SK-N-SH (cell line): ENCODE measurements at regions of chr3 and their contacts with region 1.

Region 1: GRCh38 chr3:126752303-126752842 is 48.3 kb downstream of the CHCHD6 start:
- DNase-seq: peak; percentile 82
- H3K4me3 ChIP-seq: no peak overlapping the region; a peak in 1 of 4 replicates
- H3K27ac ChIP-seq: peak overlapping the region in 1 of 2 experiments; percentile 3; a peak in 1 of 4 replicates
- H3K4me1 ChIP-seq: peaks cover 0 to 53% of the 10 kb centered on the region in 2 experiments; a peak in 2 of 4 replicates
- H3K27me3 ChIP-seq: no peaks in the 10 kb centered on the region
- CTCF ChIP-seq: peak; percentile 93
- EP300 ChIP-seq: no peak
- RAD21 ChIP-seq: peak; percentile 98

Region 2: DNA sequence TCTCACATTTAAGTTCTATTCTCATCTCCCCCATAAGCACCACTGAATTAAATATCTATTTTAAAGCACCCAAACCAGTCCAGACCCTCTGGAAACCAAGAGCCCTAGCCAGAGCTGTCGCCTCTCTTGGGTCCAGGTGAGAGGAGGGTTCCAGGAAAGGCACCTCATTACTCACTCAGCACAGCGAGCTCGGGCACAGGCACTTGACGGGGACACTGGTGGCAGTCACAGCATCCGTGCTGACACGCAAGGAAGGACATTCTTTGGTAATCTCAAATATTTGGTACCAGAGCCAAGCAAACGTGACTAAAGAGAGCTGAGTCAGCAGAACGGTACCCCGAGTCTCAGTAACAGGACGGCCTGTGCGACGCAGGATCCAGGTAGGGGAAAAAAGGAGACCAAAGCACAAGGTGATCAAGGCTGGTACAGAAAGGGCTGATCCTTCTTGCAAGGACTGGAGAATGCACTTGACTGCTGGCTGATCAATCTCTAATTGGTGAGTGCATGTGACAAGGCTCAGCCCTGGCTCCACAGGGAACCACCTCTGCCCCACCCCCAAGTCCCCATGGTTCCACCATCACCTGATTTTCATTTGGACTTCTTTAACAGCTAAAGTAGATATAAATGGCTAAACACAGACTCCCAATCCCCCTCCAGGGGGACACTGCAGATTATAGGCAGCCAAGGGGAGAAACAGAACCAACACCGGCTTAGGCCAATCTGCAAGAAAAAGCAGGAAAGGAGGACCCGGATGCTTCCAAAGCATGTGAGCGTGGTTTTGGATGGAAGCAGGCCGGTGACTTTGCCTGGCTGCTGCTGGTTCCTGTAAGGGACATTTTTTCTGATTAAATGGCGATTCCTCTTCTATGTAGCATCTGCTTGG is 13.1 kb after region 1 on chr3:
- CTCF ChIA-PET with region 1: interaction called, 17 read pairs
- POLR2A ChIA-PET with region 1: no interaction called
- DNase-seq: no peak
- H3K4me3 ChIP-seq: no peak overlapping the region
- H3K27ac ChIP-seq: no peak overlapping the region
- H3K4me1 ChIP-seq: no peaks in the 10 kb centered on the region
- H3K27me3 ChIP-seq: no peaks in the 10 kb centered on the region
- CTCF ChIP-seq: no peak
- EP300 ChIP-seq: no peak
- RAD21 ChIP-seq: no peak

Region 3: GRCh38 chr3:126939338-126939718 is 187.0 kb after region 1 on chr3:
- CTCF ChIA-PET with region 1: interaction called, 20 read pairs
- POLR2A ChIA-PET with region 1: no interaction called
- DNase-seq: peak; percentile 48
- H3K4me3 ChIP-seq: no peak overlapping the region
- H3K27ac ChIP-seq: peak overlapping the region; percentile 27 to 43; a peak in 3 of 4 replicates
- H3K4me1 ChIP-seq: peaks cover 32 to 43% of the 10 kb centered on the region in 2 experiments
- H3K27me3 ChIP-seq: no peaks in the 10 kb centered on the region
- CTCF ChIP-seq: peak; percentile 30
- EP300 ChIP-seq: no peak
- RAD21 ChIP-seq: peak; percentile 53

Region 4: DNA sequence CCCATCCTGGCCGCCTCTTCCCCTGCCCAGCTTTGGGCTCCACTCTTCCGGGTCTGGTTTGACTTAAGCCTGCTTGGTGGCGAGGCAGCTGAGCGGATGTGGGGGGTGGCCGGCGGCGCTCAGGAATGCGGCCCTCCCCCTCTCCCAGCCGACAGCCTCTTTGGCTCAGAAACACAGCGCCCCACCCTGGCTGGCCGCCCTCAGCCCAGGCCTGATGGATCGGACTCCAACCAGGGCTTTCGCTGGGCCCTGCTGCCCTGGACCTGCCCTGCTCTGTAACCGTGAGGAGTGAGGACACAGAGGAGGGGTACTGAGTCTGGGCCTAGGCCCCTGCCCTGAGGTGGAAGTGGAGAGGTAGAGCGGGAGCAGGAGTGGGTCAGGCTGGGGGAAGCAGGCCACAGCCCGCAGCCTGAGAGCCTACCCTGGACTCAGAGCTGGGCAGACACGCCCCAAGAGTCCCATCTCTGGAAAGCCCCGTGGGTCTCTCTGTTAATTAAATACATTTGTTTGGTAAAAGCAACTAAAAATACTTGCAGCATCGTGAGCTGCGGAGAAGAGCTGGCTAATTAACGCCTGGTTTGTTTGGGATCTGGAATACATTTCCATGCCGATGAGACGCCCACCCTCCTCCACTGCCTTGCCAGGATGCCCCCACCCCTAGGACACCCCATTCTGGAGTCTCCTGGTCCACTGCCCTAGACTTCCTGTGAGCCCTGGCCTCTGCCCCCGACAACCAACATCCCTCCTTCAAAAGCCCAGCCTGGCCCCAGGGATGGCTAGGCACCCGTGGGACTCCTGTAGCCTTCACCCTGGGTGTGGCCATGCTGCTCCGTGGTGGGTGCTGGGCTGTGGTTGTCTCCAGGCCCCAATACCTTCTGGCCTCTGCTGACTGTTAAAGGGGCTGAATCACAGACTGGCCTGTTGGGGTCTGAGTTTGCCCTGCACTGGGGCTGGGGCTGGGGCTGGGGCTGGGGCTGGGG is 250.1 kb after region 1 on chr3:
- CTCF ChIA-PET with region 1: interaction called, 16 read pairs
- POLR2A ChIA-PET with region 1: no interaction called
- DNase-seq: peak; percentile 97
- H3K4me3 ChIP-seq: peak overlapping the region in 1 of 2 experiments; percentile 28; a peak in 1 of 4 replicates
- H3K27ac ChIP-seq: peak overlapping the region; percentile 87 to 97
- H3K4me1 ChIP-seq: peaks cover 23 to 78% of the 10 kb centered on the region in 2 experiments; a peak in 3 of 4 replicates
- H3K27me3 ChIP-seq: no peaks in the 10 kb centered on the region
- CTCF ChIP-seq: peak; percentile 78
- EP300 ChIP-seq: peak in 1 of 2 experiments; percentile 80; a peak in 2 of 4 replicates
- RAD21 ChIP-seq: peak; percentile 47

Region 5: DNA sequence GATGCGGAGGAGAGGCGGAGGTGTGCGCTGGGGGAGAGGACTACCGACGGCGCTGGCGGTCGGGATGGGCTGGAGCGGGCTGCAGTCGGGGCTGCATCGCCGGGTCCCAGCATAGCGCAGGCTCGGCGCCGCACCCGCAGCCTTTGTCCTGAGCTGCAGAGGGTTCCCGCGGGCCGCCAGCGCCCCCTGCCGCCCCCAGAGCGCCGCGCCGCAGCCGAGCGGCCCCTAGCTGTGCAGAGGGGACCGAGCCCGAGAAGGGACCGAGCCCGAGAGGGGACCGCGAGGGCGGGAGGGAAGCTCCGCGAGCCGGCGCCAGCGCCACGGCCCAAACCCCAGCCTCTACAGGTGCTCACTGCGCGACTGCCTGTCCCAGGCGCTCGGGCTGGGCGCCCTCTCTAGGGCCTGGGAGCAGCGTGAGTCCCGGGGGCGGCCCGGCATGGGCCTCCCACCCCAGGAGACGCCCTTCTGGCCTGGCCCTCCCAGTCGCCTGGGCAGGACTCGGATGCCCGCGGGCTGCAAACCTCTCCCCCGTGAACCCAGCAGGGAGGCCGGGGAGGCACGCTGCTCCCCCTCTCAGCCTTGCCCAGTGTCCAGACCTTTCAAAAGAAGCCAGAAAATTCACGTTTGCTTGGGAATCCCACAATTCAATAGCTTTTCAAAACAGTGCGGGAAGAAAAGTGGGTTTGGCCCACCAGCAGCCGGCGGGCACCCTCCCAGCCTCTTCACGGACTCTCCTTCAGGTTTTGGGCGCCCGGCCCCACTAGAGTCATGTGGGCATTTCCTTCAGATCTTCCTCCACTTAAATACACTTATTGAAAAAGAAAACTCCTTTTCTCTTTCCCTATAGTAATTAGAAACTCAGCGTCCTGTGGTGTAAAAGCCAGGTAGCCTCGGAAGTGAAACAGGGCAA is 703.4 kb after region 1 on chr3:
- CTCF ChIA-PET with region 1: interaction called, 31 read pairs
- POLR2A ChIA-PET with region 1: no interaction called
- DNase-seq: peak; percentile 98
- H3K4me3 ChIP-seq: peak overlapping the region; percentile 40 to 58; a peak in 3 of 4 replicates
- H3K27ac ChIP-seq: no peak overlapping the region; a peak in 1 of 4 replicates
- H3K4me1 ChIP-seq: peaks cover 7 to 13% of the 10 kb centered on the region in 2 experiments; a peak in 2 of 4 replicates
- H3K27me3 ChIP-seq: no peaks in the 10 kb centered on the region
- CTCF ChIP-seq: peak; percentile 81
- EP300 ChIP-seq: peak in 1 of 2 experiments; percentile 19; a peak in 1 of 4 replicates
- RAD21 ChIP-seq: peak; percentile 91